ENCODE measurements at regions of chr2 and their contacts with region 1.

Region 1: DNA sequence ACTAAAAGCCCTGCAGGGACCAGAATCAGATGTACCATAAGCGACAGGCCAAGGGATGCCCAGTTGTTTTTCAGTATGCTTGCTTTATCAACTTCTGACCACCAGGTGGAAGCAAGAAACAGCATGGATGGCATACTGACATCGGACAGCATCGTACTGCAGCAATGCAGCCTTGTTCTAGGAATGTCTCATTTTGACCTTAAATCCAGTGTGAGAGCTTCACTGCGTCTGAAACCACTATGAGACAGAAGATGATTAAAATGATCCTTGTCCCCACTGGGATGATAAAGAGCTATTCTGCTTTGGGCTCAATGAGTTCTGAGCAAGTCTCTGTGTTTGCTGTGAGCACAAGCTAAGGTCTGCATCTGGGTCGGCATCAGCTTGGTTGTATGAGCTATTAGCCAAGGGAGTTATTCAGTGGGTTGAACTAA is 54.3 kb downstream of the CDK15 start:
- DNase-seq: peak in 39 of 42 donors; percentile 12 to 85 (median 55)

Region 2: GRCh38 chr2:201964631-201965206 is 104.1 kb after region 1 on chr2:
- intact Hi-C with region 1: no loop called
- DNase-seq: peak in 6 of 42 donors; percentile 14 to 60 (median 18)

Region 3: DNA sequence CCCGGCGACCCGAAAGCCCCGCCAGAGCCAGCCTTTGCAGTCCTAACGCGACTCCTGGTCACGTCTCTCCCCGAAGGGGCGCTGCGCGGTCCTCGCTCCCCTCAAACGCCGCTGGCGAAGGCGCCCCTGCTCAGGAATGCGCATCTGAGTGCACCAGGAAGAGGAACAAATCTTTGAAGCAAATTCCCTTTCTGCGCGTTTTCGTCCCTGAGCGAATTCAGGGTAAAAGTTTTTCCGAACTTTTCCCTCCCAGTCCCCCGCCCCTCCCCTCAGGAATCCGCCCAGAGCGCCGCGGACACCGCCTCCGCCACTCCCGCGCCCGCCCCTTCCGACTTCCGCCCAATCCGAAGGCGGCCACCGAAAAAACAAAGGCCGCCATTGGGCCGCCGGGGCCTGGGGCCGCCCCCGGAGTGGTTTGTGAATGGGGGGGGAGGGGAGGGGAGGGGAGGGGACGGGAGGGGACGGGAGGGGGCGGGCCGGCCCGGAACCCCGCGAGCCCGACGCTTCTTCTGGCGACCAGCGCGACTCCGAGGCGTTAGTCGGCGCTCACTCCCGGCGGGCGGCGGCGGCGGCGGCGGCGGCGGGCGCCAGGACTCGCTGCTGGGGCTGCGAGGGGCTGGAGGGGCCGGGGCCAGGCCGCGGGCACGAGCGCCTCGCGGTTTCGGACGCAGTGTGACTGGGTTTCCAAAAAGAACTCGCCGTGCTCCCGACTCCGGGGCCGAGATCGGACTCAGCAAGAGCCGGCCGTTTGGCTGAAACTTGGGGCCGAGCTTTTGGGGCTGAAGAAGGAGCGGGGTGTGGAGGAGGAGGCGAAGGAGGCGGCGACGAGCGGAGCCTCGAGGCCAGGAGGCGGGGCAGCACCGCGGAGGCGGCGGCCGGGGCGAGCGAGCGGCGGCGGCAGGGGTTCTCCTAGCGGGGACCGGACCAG is 172.9 kb after region 1 on chr2 and contains the start of gene FZD7:
- intact Hi-C with region 1: loop called (anchors 10 kb)
- DNase-seq: peak; percentile 49 to 92 (median 85)

Region 4: DNA sequence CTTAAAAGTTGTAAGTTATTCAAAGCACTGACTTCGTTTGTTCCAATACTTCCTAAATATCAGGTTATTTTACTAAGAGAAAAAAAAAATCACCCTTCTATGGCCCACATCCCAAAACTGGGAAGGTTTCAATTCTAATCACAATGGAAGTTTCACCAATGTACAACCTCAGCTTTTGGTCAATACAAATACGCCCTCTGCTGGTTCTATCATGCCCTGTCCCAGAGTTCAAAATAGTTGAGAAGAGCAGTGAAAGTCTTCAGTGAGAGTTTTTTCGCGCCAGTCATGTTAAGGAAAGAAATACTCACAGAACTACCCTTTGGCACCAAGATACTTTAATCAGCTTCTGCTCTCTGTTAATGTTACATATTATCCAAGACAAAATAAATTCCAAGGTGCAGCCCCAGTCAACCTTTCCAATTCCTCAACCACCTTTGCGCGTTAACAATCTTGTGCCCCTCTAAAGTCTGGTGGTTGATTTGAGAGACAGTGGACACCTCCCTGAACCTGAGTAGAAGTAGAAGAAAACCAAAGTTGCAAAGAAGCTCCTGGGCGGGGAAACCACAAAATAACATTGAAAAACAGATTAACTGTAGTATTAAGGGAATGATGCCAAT is 317.8 kb after region 1 on chr2:
- intact Hi-C with region 1: loop called (anchors 2 kb)
- DNase-seq: peak in 35 of 42 donors; percentile 14 to 87 (median 60)

Region 5: DNA sequence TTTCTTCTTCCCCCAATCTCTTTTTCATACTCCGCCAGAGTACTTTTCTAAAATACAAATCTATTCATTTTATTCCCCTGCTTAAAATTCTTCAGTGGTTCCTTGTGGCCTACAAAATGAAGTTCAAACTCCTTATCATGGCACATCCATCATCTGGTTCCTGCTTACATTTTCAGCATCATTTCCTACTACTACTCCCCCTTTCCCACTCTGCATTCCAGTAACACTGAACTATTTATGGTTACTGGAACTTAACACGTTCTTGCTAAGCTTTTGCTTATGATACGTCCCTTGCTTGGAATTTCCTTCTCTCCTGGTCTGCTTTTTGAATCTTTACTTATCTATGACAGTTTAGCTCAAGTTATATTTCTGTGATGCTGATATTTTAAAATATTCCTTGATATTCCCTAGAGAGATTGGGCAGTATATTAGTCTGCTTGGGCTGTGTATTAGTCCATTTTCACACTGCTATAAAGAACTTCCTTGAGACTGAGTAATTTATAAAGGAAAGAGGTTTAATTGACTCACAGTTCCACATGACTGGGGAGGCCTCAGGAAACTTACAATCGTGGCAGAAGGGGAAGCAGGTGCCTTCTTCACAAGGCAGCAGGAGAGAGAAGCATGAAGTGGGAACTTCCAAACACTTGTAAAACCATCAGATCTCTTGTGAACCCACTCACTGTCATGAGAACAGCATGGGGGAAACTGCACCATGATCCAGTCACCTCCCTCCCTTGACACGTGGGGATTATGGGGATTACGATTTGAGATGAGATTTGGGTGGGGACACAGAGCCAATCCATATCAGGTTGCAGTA is 568.7 kb after region 1 on chr2:
- intact Hi-C with region 1: no loop called
- DNase-seq: no peak

Region 6: DNA sequence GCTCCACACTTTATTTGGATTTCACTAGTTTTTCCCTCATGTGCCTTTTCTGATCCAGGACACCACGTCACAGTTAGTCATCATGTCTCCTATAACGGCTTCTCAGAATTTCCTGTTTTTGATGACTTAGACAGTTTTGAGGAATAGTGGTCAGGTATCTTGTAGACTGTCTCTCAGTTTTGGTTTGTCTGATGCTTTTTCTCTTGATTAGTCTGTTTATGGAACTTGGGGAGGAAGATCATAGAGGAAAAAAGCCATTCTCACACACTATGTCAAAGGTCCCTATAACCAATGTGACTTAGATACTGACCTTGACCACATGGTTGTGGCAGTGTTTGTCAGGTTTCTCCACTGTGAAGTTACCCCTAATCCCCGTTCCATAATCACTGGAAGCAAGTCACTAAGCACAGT is 1585.4 kb after region 1 on chr2:
- intact Hi-C with region 1: no loop called
- DNase-seq: no peak

Measured in head of caudate nucleus (tissue), 42 donors.